A673 (cell line): ENCODE measurements at regions of chr12 and their contacts with region 1.

Region 1: GRCh38 chr12:57462251-57462911 is 2.8 kb downstream of the GLI1 start:
- DNase-seq: peak; percentile 95
- H3K4me3 ChIP-seq: peak overlapping the region; percentile 60
- H3K27ac ChIP-seq: peak overlapping the region; percentile 85
- H3K4me1 ChIP-seq: peaks cover 28% of the 10 kb centered on the region
- H3K27me3 ChIP-seq: no peaks in the 10 kb centered on the region
- CTCF ChIP-seq: peak; percentile 99

Region 2: DNA sequence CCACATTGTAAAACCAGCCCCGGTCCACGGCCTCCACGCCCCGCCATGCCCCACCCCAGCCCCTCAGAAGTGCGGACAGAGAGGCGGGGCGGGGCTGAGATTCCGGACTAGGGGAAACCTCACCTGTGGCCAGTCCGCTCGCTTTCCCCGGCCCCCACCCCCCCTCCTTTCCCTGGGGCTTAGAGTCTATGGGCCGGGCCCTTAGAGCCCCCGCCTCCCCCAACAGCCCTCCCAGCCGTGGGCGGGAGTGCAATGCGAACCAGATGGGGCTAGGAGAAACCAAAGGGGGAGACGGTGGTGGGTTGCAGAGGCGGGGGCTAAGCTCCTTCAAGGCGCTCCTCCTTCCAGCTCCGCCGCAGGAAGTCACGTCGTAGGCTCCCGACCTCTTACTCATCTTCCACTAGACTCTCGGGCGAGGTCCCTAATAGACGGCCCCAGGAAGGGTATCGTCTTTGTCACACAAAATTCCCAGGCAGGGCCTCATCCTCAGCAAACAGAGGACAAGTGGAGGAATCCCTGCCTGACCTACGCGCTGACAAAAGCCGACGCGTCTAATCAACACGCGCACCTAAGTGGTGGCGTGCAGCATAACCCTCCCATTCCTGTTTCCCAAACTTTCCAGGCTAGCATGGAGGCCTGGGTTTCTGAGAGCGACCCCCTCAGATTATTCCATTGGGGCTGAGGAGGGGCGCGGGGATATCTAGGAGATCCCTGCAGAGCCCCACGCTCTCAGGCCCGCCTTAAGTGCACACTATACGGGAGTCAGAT is 374.5 kb before region 1 on chr12:
- CTCF ChIA-PET with region 1: no interaction called
- POLR2A ChIA-PET with region 1: no interaction called
- intact Hi-C with region 1: no loop called
- DNase-seq: peak; percentile 99
- H3K4me3 ChIP-seq: peak overlapping the region; percentile 63
- H3K27ac ChIP-seq: peak overlapping the region; percentile 100
- H3K4me1 ChIP-seq: peaks cover 44% of the 10 kb centered on the region
- H3K27me3 ChIP-seq: no peaks in the 10 kb centered on the region
- CTCF ChIP-seq: no peak

Region 3: DNA sequence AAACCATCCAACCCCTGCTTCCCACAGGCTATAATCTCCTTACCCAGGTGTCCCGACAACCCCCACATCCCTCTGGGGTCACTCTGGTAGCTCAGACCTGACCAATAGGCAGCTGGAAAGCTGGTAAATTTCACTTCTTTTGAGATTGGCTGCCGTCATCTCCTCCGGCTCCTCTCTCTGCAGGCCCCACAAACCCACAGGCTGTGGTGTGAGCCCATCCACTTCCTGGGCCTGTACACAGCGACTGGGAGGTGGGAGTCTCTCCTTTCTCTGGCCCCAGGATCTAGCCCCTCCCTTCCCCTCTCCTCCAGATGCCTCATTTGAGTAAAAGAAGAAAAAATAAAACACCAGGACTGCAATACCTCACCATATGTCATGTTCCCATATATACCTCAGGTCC is 27.1 kb before region 1 on chr12:
- CTCF ChIA-PET with region 1: interaction called, 13 read pairs
- POLR2A ChIA-PET with region 1: no interaction called
- intact Hi-C with region 1: no loop called
- DNase-seq: no peak
- H3K4me3 ChIP-seq: no peak overlapping the region
- H3K27ac ChIP-seq: no peak overlapping the region
- H3K4me1 ChIP-seq: peaks cover 5% of the 10 kb centered on the region
- H3K27me3 ChIP-seq: no peaks in the 10 kb centered on the region
- CTCF ChIP-seq: no peak

Region 4: GRCh38 chr12:57522887-57523705 is 60.7 kb after region 1 on chr12:
- CTCF ChIA-PET with region 1: interaction called, 13 read pairs
- POLR2A ChIA-PET with region 1: no interaction called
- intact Hi-C with region 1: no loop called
- DNase-seq: peak; percentile 64
- H3K4me3 ChIP-seq: peak overlapping the region; percentile 75
- H3K27ac ChIP-seq: peak overlapping the region; percentile 85
- H3K4me1 ChIP-seq: peaks cover 37% of the 10 kb centered on the region
- H3K27me3 ChIP-seq: no peaks in the 10 kb centered on the region
- CTCF ChIP-seq: no peak

Region 5: GRCh38 chr12:57621497-57622292 is 159.3 kb after region 1 on chr12:
- CTCF ChIA-PET with region 1: interaction called, 4 read pairs
- POLR2A ChIA-PET with region 1: no interaction called
- intact Hi-C with region 1: loop called (anchors 2 kb)
- DNase-seq: peak; percentile 61
- H3K4me3 ChIP-seq: peak overlapping the region; percentile 50
- H3K27ac ChIP-seq: no peak overlapping the region
- H3K4me1 ChIP-seq: peaks cover 8% of the 10 kb centered on the region
- H3K27me3 ChIP-seq: peaks cover 13% of the 10 kb centered on the region
- CTCF ChIP-seq: peak; percentile 95

Region 6: GRCh38 chr12:57744777-57745484 is 282.6 kb after region 1 on chr12 and contains the start of gene TSPAN31:
- CTCF ChIA-PET with region 1: no interaction called
- POLR2A ChIA-PET with region 1: no interaction called
- intact Hi-C with region 1: loop called (anchors 5 kb)
- DNase-seq: peak; percentile 99
- H3K4me3 ChIP-seq: peak within 1 kb of the TSS; percentile 60
- H3K27ac ChIP-seq: peak within 1 kb of the TSS; percentile 97
- H3K4me1 ChIP-seq: peaks cover 12% of the 10 kb centered on the region
- H3K27me3 ChIP-seq: no peaks in the 10 kb centered on the region
- CTCF ChIP-seq: no peak
- total RNA-seq, gene TSPAN31: 8.9 and 24.6 TPM in 2 replicates

Region 7: GRCh38 chr12:57965766-57966165 is 503.4 kb after region 1 on chr12:
- CTCF ChIA-PET with region 1: no interaction called
- POLR2A ChIA-PET with region 1: no interaction called
- intact Hi-C with region 1: no loop called
- DNase-seq: no peak
- H3K4me3 ChIP-seq: no peak overlapping the region
- H3K27ac ChIP-seq: no peak overlapping the region
- H3K4me1 ChIP-seq: no peaks in the 10 kb centered on the region
- H3K27me3 ChIP-seq: no peaks in the 10 kb centered on the region
- CTCF ChIP-seq: no peak